HCT116 (cell line): ENCODE measurements at regions of chr10 and their contacts with region 1.

Region 1: GRCh38 chr10:88721392-88721791 is 15.3 kb downstream of the LIPK start:
- DNase-seq: no peak
- ATAC-seq: no peak
- H3K4me3 ChIP-seq: no peak overlapping the region
- H3K27ac ChIP-seq: no peak overlapping the region
- H3K4me1 ChIP-seq: no peaks in the 10 kb centered on the region
- H3K27me3 ChIP-seq: no peaks in the 10 kb centered on the region
- CTCF ChIP-seq: no peak
- POLR2A ChIP-seq: no peak
- RAD21 ChIP-seq: no peak

Region 2: GRCh38 chr10:88735661-88736060 is 14.3 kb after region 1 on chr10:
- CTCF ChIA-PET with region 1: no interaction called
- POLR2A ChIA-PET with region 1: no interaction called
- RAD21 ChIA-PET with region 1: no interaction called
- intact Hi-C with region 1: loop called (anchors 2 kb)
- DNase-seq: no peak
- ATAC-seq: no peak
- H3K4me3 ChIP-seq: no peak overlapping the region
- H3K27ac ChIP-seq: no peak overlapping the region
- H3K4me1 ChIP-seq: 0 out of 4 replicates have a peak, but pooled peaks cover 0 to 3% of the 10 kb centered on the region in 2 experiments
- H3K27me3 ChIP-seq: no peaks in the 10 kb centered on the region
- CTCF ChIP-seq: no peak
- POLR2A ChIP-seq: no peak
- RAD21 ChIP-seq: no peak

Region 3: DNA sequence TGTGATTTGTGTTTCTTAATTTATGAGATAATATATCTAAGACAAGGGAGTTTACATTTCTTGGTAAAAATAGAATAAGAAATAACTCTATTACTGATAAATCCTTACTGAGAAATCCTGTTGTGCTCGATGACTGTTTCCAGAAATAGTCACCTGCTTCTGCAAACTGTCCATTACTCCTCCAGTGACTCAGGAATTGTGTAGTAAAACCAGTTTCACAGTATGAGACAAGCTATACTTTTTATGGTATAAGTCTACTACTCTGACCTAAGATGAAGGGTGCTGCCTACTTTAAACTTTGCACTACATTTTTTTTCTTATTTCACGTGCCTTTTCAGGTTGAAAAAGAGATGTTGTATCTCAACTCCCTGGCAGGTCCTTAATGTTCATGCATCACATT is 137.1 kb after region 1 on chr10:
- CTCF ChIA-PET with region 1: no interaction called
- POLR2A ChIA-PET with region 1: no interaction called
- RAD21 ChIA-PET with region 1: no interaction called
- intact Hi-C with region 1: no loop called
- DNase-seq: no peak
- ATAC-seq: no peak
- H3K4me3 ChIP-seq: no peak overlapping the region
- H3K27ac ChIP-seq: no peak overlapping the region
- H3K4me1 ChIP-seq: peaks cover 0 to 3% of the 10 kb centered on the region in 2 experiments; a peak in 1 of 4 replicates
- H3K27me3 ChIP-seq: no peaks in the 10 kb centered on the region
- CTCF ChIP-seq: no peak
- POLR2A ChIP-seq: no peak
- RAD21 ChIP-seq: no peak